Heart right ventricle (tissue), 16 donors: ENCODE measurements at regions of chr5 and their contacts with region 1.

Region 1: DNA sequence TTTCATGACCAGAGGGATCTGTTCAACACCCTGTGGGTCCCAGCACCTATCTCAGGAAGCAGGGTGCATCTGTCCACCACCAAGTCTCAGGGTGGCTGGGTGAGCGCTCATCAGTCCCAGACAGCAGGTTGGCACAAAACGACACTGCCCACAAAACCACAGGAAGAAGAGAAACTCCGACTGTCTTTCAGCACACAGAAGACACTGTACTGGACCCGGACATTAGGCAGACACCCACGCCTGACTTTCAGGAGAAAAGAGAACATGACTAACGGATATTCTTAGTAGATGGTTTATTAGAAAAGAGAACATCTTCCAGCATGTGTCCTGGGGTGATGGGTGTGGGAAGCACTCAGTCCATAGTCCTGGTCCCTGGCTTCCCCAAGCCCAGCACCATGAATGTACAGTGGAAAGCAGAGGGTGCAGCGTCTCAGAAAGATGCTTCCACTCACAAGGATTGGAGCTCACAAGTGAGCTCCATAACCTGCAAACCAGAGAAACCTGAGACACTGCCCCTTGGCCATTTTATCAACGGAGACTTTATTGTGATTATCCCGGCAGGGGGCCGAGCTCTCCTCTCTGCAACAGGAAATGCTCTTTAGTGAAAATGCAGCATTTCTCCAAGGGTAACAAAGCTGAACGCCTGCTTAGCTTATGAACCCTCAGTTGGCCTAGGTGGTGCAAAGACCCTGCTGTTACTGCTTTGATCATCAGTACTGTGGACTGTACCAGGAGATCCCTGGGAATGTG is 35.8 kb upstream of the LCP2 start:
- DNase-seq: no peak
- ATAC-seq: peak in 2 of 8 donors; percentile 9 to 15
- H3K4me3 ChIP-seq: peak overlapping the region in 1 of 10 donors; percentile 3
- H3K27ac ChIP-seq: peak overlapping the region in 3 of 10 donors; percentile 75 to 92 (median 81)
- H3K4me1 ChIP-seq: peaks cover 6 to 93% (median 16%) of the 10 kb centered on the region in 9 donors
- H3K27me3 ChIP-seq: no peaks in the 10 kb centered on the region
- CTCF ChIP-seq: no peak

Region 2: DNA sequence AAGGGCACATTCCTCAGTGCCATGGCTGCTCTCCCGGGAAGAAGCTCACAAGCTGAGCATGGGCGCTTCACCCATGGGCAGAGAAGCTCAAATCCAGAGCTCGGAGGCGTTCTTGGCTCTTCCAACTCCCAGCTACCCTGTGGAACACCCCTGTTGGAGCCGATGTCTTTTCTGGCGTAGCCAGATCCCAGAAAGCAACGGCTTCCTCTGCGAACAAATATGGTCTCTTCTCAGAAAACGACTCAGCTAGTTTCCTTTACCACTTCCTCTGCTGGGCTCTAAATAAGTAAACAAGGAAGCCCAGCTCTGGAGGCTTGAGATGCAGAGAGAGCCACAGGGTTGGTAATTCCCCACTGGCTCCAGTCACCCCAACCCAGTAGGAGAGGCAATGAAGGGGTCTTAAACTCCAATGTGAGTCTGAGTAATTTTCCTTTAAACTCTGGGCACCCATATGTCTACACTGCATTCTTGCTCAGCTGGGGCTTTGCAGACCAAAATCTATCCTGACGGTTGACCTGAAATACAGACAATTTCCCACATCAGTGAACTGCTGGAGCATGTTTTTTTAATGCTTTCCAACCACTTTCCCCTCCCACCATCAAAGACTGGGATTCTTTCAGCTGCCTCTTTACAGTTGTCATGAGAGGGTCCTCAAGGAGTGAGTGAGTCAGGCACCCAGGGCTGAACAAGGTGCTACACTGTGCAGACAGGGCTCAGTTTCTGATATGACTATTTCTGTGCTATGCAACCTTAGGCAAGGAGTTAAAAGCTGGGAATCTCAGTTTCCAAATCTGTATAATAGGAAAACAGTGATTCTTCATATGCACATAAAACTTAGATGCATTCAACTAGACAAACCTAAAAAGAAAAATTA is 35.5 kb before region 1 on chr5 and contains the start of gene LCP2:
- intact Hi-C with region 1: loop called in 1 of 10 experiments (anchors 5 kb)
- DNase-seq: no peak
- ATAC-seq: peak; percentile 40 to 80 (median 49)
- H3K4me3 ChIP-seq: peak within 1 kb of the TSS; percentile 34 to 79 (median 52)
- H3K27ac ChIP-seq: peak within 1 kb of the TSS; percentile 75 to 99 (median 82)
- H3K4me1 ChIP-seq: peaks cover 0 to 68% (median 6%) of the 10 kb centered on the region in 9 donors
- H3K27me3 ChIP-seq: no peaks in the 10 kb centered on the region
- CTCF ChIP-seq: no peak
- total RNA-seq, gene LCP2: 3.2 to 35.1 (median 4.6) TPM